Esophagus muscularis mucosa (tissue), 4 donors: ENCODE measurements at regions of chr6 and their contacts with region 1.

Region 1: GRCh38 chr6:160455541-160456213 is 107.5 kb downstream of the SLC22A3 start:
- DNase-seq: peak; percentile 92
- H3K4me3 ChIP-seq: peak overlapping the region; percentile 30 to 48 (median 42)
- H3K27ac ChIP-seq: peak overlapping the region; percentile 58 to 76 (median 64)
- H3K4me1 ChIP-seq: peaks cover 12 to 17% (median 16%) of the 10 kb centered on the region in 4 donors
- H3K27me3 ChIP-seq: no peaks in the 10 kb centered on the region
- CTCF ChIP-seq: peak; percentile 95 to 98 (median 97)
- EP300 ChIP-seq: no peak
- POLR2A ChIP-seq: no peak

Region 2: GRCh38 chr6:159505140-159505922 is 950.3 kb before region 1 on chr6:
- intact Hi-C with region 1: no loop called
- DNase-seq: peak; percentile 87
- H3K4me3 ChIP-seq: no peak overlapping the region
- H3K27ac ChIP-seq: peak overlapping the region in 1 of 4 donors; percentile 4
- H3K4me1 ChIP-seq: peaks cover 0 to 16% (median 6%) of the 10 kb centered on the region in 4 donors
- H3K27me3 ChIP-seq: no peaks in the 10 kb centered on the region
- CTCF ChIP-seq: no peak
- EP300 ChIP-seq: no peak
- POLR2A ChIP-seq: no peak

Region 3: DNA sequence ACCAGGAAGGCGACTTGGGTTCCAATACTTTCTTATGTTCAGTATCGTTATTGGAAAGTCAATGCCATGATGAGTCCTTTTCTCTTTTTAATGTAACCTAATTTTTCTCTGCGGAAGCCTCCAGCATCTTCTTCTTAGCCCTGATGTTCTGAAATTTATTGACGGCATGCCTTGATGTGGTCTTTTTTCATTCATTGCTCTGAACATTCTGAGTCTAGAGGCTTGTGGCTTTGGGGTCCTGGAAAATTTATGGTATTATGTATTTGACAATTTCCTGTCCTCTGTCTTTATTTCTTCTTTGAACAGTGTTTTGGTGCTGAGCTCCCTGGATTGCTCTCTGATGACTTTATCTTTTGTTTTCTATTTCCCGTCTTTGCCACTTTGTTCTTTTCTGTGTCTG is 593.6 kb before region 1 on chr6:
- intact Hi-C with region 1: loop called (anchors 5 kb)
- DNase-seq: no peak
- H3K4me3 ChIP-seq: no peak overlapping the region
- H3K27ac ChIP-seq: no peak overlapping the region
- H3K4me1 ChIP-seq: no peaks in the 10 kb centered on the region
- H3K27me3 ChIP-seq: peaks cover 0 to 5% (median 0%) of the 10 kb centered on the region in 4 donors
- CTCF ChIP-seq: no peak
- EP300 ChIP-seq: no peak
- POLR2A ChIP-seq: no peak

Region 4: DNA sequence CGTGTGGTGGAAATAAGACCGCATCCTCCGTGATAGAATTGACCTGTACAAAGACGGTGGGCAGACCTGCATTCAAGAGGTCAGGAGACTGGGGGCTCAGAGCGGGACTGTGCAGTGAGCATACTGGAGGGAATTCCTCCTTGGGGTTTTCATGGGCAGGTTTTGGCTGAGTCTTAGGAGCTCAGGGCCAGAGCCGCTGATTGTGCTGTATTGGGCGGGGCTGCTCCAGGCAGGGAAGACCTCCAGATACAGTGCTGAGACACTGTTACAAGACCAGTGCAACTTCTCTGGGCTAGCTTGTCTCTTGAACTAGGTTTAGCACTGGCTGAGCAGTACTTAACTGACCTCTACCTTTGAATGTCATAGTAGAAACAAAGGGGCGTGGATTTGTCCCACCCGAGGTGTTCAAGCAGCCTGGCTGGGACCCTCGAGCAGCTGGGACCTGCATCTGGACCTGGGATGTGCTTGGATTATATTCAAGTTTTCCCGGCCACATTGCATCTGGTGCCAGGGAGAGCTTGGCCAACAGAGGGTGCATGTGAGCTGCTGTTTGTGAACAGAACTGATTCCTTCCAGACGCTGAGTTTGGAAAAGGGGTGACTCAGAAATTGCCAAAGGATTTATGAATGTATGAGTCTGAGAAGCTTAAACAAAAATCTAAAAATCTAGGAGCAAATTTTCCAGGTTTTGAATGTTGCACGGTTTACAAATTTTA is 367.5 kb before region 1 on chr6:
- intact Hi-C with region 1: loop called (anchors 2 kb)
- DNase-seq: peak; percentile 94
- H3K4me3 ChIP-seq: no peak overlapping the region
- H3K27ac ChIP-seq: peak overlapping the region in 3 of 4 donors; percentile 5 to 61 (median 42)
- H3K4me1 ChIP-seq: peaks cover 0 to 13% (median 9%) of the 10 kb centered on the region in 4 donors
- H3K27me3 ChIP-seq: no peaks in the 10 kb centered on the region
- CTCF ChIP-seq: peak; percentile 58 to 79 (median 66)
- EP300 ChIP-seq: no peak
- POLR2A ChIP-seq: no peak

Region 5: GRCh38 chr6:160137989-160138835 is 317.5 kb before region 1 on chr6:
- intact Hi-C with region 1: loop called (anchors 2 kb)
- DNase-seq: peak; percentile 92
- H3K4me3 ChIP-seq: no peak overlapping the region
- H3K27ac ChIP-seq: peak overlapping the region; percentile 6 to 63 (median 52)
- H3K4me1 ChIP-seq: peaks cover 4 to 47% (median 35%) of the 10 kb centered on the region in 4 donors
- H3K27me3 ChIP-seq: no peaks in the 10 kb centered on the region
- CTCF ChIP-seq: peak; percentile 78 to 81 (median 79)
- EP300 ChIP-seq: no peak
- POLR2A ChIP-seq: no peak

Region 6: GRCh38 chr6:160398674-160399271 is 56.9 kb before region 1 on chr6:
- intact Hi-C with region 1: no loop called
- DNase-seq: no peak
- H3K4me3 ChIP-seq: no peak overlapping the region
- H3K27ac ChIP-seq: no peak overlapping the region
- H3K4me1 ChIP-seq: peaks cover 0 to 35% (median 14%) of the 10 kb centered on the region in 4 donors
- H3K27me3 ChIP-seq: no peaks in the 10 kb centered on the region
- CTCF ChIP-seq: no peak
- EP300 ChIP-seq: no peak
- POLR2A ChIP-seq: no peak

Region 7: DNA sequence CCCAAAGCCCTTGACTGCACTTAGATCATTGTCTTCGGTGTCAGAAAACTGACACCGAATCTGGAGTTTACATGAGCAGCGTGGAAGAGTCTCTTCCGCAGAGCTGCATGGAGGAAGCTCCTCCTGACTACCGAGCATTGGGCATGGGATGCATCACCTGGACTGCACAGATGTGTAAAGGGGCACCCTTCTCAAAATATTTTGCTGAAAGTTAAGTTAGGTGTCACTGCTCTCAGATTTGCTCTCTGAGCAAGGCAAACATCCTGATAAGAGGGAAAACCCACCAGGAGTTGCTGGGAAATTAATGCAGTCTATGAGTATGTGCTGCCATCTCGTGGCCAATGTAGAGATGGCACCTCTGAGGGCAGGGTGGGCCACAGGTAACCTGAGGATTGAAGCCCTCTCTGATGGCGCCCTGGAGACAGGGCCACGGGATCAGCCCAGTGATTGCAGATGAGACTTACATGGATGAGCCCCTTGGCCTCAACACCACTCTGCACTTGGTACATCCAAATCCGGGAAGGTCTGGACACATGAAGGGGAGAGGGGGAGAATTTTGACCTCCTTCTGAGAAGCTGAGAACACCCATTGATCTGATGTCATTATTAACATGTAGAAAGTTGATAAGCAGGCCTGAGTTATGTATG is 78.5 kb after region 1 on chr6:
- intact Hi-C with region 1: loop called (anchors 1 kb)
- DNase-seq: no peak
- H3K4me3 ChIP-seq: peak overlapping the region in 3 of 4 donors; percentile 14 to 38 (median 21)
- H3K27ac ChIP-seq: no peak overlapping the region
- H3K4me1 ChIP-seq: peaks cover 4 to 7% (median 7%) of the 10 kb centered on the region in 4 donors
- H3K27me3 ChIP-seq: no peaks in the 10 kb centered on the region
- CTCF ChIP-seq: peak; percentile 88 to 97 (median 94)
- EP300 ChIP-seq: no peak
- POLR2A ChIP-seq: no peak

Region 8: DNA sequence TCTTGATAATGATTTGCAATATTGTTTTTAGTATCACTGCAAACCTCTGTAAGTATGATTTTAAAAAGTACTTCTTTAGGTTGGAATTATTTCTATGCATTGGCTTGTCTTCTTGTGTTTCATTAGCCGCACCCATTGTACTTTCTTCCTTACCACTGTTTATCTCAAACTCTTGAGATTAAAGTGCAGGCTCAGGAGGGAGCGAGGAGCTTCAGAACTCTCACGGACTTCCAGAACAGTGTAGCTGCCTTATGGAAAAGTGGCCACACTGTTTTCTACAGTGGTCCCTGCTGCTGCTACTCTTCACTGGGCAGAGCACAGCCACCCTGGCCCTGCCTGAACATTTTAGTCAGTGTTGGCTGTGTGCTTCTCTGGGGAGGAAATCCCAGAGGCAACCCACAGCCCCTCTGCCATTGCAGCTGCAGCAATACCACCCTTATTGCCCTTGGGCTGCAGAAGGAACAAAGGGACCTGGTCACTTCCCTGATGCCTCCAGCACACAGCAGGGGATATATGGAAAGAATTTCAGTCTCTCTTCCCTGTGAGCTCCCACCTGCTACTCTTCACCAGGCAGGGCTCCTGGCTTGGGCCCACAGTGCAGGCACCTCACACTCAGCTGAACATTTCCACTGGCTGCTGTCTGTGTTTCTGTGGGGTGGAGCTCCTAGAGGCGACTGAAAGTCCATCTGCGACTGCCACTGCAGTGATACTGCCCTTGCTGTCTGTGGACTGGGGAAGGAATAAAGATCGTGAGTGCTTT is 444.2 kb after region 1 on chr6:
- intact Hi-C with region 1: no loop called
- DNase-seq: no peak
- H3K4me3 ChIP-seq: no peak overlapping the region
- H3K27ac ChIP-seq: no peak overlapping the region
- H3K4me1 ChIP-seq: no peaks in the 10 kb centered on the region
- H3K27me3 ChIP-seq: no peaks in the 10 kb centered on the region
- CTCF ChIP-seq: no peak
- EP300 ChIP-seq: no peak
- POLR2A ChIP-seq: no peak